Left colon (tissue), 2 donors: ENCODE measurements at regions of chr6 and their contacts with region 1.

Region 1: DNA sequence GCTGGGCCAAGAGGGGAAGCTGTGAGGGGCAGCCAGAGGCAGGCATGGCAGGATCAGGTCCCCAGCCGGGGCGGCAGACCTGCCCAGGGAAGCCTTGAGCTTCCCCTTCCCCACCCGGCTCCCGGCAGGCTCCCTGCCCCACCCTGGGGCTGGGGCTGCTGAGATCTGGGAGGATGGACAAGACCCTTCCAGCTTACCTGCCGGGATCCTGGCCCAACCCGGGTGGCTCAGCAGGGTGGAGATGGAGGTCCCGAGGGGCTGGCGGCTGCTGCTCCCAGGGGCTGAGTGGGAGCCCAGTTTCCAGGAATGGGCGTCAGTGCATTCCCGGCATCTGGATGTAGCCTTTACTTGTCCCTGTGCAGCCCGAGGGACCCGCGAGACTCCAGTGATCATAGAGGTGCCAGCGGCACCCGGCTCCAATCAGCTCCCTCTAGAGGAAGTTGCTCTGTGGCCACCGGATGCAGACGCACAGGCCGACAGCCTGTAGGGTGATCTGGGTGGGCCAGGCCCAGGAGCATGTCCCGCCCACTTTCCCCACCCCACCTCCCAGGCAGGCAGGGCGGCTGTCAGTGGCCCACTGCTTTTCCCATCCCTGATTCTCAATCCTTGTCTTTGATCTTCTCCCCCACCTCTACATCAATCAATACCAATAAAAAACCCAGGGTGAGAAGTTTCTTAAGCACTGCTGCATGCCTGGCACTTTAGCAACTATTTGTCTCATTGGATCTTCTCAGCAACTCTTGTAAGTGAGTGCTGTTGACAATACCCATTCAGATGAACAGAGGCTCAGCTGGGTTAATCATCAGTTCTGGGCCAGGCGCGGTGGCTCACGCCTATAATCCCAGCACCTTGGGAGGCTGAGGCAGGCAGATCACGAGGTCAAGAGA is at the start of gene BAK1:
- DNase-seq: peak; percentile 95 to 96
- ATAC-seq: peak; percentile 67
- total RNA-seq, gene BAK1: 85.6 to 93.5 TPM

Region 2: DNA sequence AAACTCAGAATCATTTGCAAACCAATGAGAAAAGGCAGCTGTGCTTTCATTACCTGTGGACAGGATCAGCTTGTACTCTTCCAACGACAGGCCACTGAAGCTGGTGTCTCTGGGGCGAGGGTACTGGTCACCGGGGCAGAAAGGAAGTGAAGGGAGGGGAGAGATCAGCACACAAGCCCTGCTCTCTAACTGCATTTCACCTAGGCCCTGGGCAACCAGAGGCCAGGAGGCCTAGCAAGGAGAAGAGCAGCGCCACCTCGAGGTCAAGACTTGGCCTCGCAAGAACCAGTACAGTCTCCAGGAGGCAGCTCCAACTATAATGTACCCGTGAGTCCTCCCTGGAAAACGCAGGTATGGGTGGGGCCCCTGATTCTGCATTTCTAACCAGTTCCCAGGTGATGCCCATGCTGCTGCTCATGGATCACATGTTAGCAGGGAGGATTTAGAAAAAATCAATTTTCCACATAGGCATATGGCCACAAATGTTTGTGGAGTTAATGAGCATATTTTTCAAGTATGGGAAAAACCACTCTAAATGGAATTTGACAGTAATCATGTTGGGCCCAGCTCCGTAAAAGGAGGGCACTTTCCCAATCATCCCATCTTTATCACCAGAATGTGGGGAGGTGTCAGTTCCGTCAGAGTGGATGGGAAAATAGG is 120.5 kb after region 1 on chr6:
- intact Hi-C with region 1: loop called in 1 of 2 experiments (anchors 10 kb)
- DNase-seq: peak; percentile 71 to 86
- ATAC-seq: peak; percentile 84